GM13976 (cell line): ENCODE measurements at regions of chr13 and their contacts with region 1.

Region 1: GRCh38 chr13:28792992-28793391 is 27.1 kb upstream of the MTUS2 start:
- DNase-seq: no peak
- CTCF ChIP-seq: no peak

Region 2: GRCh38 chr13:28099396-28100149 is 693.4 kb before region 1 on chr13:
- in situ Hi-C with region 1: loop called (anchors 25 kb)
- DNase-seq: peak; percentile 38
- CTCF ChIP-seq: no peak

Region 3: GRCh38 chr13:28282451-28282850 is 510.5 kb before region 1 on chr13:
- in situ Hi-C with region 1: no loop called
- DNase-seq: no peak
- CTCF ChIP-seq: no peak

Region 4: DNA sequence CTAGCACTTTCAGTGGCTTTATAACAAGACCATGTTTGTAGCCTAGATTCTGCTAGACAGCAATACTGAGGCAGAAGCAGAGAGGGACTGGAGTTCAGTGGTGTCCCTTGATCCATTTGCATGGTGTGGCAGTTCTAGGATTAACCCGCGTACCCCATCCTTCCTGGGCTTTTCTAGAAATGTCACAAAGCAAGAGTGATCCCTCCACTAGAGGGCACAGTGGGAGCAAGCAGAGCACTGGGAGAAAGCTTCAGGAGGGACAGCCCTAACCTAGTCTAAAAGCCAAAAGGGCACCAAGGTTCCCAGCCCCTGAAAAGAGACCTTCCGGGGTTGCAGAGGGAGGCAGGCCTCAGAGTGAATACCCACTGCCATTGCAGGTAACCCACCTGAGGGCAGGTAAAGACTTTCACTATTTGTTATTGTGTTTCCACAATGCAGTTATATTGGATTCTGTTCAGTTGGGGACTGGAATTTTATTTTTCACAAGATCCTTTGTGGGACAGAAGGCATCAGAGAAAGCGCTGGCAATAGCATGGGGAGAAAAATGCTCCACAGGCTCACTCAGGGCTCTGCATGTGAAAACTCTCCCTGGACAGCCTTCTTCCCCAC is 468.7 kb before region 1 on chr13:
- in situ Hi-C with region 1: loop called (anchors 10 kb)
- DNase-seq: peak; percentile 80
- CTCF ChIP-seq: peak; percentile 73

Region 5: DNA sequence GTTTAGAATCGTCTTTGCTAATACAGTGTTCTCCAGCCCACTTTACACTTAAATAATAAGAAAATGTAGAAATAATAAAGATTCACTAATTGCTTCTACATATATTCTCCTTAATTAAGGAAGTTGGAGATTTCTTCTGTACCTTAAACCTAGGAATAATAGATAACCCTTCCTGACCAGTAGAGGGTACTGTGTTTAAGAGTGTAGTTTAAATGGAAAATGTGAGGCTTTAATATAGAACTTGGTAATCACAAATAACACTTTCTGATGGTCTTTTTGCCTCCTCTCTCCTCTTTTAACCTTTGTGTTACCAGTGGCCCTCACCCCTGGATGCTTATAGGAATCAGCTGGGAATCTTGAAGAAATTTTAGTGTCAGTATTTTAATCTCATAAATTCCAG is 113.4 kb before region 1 on chr13:
- in situ Hi-C with region 1: loop called (anchors 10 kb)
- DNase-seq: peak; percentile 27
- CTCF ChIP-seq: no peak